ENCODE measurements at regions of chr17 and their contacts with region 1.

Region 1: DNA sequence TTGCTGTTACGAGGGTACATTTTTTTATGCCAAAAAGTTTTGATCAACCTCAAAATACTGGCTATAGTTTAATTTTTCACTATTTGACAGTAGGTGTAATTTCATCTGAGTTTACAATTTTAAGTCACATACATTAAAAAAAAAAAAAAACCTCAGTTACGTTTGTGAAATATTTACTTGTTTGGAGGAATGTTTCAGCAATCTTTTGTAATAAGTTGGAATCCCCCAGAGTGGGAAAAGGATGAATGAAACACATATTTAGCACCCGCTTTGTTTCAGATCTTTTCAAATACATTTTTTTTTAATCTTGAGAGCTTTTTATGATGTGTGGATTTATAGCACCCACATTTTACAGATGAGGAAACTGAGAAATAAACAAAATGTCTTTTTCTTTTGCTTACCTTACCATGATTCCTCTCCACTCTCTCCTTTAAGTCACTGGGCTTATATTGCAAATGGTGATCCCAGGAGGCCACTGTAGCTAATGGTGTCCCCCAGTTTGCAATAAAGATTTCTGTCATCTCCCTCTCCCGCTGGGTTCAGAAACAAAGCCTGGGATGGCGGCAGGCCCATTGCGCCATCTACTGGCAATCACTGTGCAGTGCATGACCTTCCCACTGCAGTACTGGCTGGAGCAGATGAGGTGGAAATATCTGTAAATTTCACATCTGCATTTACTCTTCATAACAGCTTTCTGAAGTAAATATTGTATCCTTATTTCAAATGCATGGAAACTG is 27.7 kb downstream of the TBC1D3B start:
- DNase-seq: peak; percentile 75
- ATAC-seq: peak; percentile 95
- H3K4me3 ChIP-seq: no peak overlapping the region
- H3K27ac ChIP-seq: no peak overlapping the region
- H3K4me1 ChIP-seq: no peaks in the 10 kb centered on the region
- H3K27me3 ChIP-seq: no peaks in the 10 kb centered on the region
- CTCF ChIP-seq: peak; percentile 99

Region 2: GRCh38 chr17:35969558-35970380 is 179.0 kb before region 1 on chr17:
- intact Hi-C with region 1: loop called (anchors 10 kb)
- DNase-seq: no peak
- ATAC-seq: peak; percentile 89
- H3K4me3 ChIP-seq: no peak overlapping the region
- H3K27ac ChIP-seq: no peak overlapping the region
- H3K4me1 ChIP-seq: peaks cover 5% of the 10 kb centered on the region
- H3K27me3 ChIP-seq: no peaks in the 10 kb centered on the region
- CTCF ChIP-seq: peak; percentile 88

Region 3: GRCh38 chr17:36027761-36028160 is 121.0 kb before region 1 on chr17:
- intact Hi-C with region 1: no loop called
- DNase-seq: no peak
- ATAC-seq: no peak
- H3K4me3 ChIP-seq: no peak overlapping the region
- H3K27ac ChIP-seq: no peak overlapping the region
- H3K4me1 ChIP-seq: no peaks in the 10 kb centered on the region
- H3K27me3 ChIP-seq: no peaks in the 10 kb centered on the region
- CTCF ChIP-seq: no peak

Region 4: DNA sequence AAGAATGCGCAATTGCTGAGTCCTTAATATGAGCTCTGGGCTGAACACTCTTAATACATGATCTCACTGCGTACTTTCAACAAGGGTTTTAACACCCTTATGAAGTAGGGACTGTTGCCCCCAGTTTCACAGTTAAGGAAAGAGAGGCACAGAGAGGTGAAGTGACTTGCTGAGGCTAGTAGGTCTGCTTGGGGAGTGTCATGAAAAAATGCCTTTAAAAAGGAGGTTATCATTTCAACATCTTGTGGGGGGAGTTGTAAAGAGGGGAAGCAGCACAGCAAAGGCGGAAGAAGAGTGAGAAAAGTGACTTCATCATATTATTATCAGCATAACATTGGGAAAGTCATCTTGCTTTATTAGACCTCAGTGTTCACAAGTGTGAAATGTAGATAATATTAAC is 64.2 kb after region 1 on chr17:
- intact Hi-C with region 1: no loop called
- DNase-seq: no peak
- ATAC-seq: peak; percentile 43
- H3K4me3 ChIP-seq: no peak overlapping the region
- H3K27ac ChIP-seq: no peak overlapping the region
- H3K4me1 ChIP-seq: no peaks in the 10 kb centered on the region
- H3K27me3 ChIP-seq: no peaks in the 10 kb centered on the region
- CTCF ChIP-seq: no peak

Region 5: DNA sequence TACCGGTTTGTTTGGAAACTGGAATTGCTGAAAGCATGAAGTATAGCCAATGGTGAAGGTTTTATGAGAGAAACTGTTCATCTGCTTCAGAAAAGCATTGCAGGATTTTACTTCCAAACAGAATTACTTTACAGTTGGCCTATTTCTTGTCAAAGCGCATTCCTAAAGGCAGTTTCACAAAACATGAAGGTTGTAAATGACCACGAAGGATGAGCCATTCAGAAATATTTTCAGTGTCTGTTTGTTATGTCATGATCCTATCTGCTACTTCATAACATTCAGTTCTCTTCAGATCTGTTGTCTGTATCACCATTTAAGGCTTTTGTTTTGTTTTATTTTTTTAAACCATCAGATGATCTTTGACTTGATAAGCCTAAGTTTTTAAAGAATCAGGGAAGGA is 845.7 kb after region 1 on chr17:
- intact Hi-C with region 1: no loop called
- DNase-seq: no peak
- ATAC-seq: no peak
- H3K4me3 ChIP-seq: no peak overlapping the region
- H3K27ac ChIP-seq: no peak overlapping the region
- H3K4me1 ChIP-seq: no peaks in the 10 kb centered on the region
- H3K27me3 ChIP-seq: no peaks in the 10 kb centered on the region
- CTCF ChIP-seq: no peak

Measured in upper lobe of right lung (tissue), 1 donor.